MCF 10A (cell line): ENCODE measurements at regions of chr5 and their contacts with region 1.

Region 1: DNA sequence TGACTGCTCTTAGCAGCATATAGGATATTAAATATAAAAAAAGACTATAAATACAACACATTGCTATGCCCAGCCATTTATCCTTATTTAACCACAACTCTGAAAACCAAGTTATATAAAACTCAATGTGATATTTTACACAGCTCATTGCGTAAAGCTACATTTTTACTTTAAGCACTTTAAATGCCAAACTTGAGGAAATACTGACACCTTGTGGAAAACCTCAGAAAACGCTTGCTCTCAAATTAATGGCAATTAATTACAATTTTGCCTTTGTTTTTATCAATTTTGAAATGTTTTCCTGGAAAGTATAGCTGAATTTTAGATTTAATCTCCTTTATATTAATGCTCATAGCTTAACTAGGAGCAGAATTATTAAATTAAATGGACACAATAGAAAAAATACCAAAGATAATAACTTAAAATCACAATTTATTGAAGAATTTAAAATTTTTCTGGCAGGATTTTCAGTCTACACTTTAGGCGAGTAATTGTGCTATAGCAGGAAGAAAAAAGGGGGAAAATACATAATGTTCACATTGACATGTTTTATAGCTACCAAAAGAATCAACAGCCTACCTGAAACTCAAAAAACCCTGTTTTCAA is 25.2 kb upstream of the PLAC8L1 start:
- DNase-seq: peak; percentile 59
- H3K4me3 Mint-ChIP-seq: no peak overlapping the region
- H3K27ac Mint-ChIP-seq: peak overlapping the region; percentile 27
- H3K4me1 Mint-ChIP-seq: no peaks in the 10 kb centered on the region
- H3K27me3 Mint-ChIP-seq: no peaks in the 10 kb centered on the region
- CTCF ChIP-seq: peak; percentile 70

Region 2: GRCh38 chr5:144832416-144832815 is 1298.1 kb before region 1 on chr5:
- CTCF ChIA-PET with region 1: no interaction called
- POLR2A ChIA-PET with region 1: no interaction called
- intact Hi-C with region 1: no loop called
- DNase-seq: peak; percentile 26
- H3K4me3 Mint-ChIP-seq: no peak overlapping the region
- H3K27ac Mint-ChIP-seq: no peak overlapping the region
- H3K4me1 Mint-ChIP-seq: peaks cover 5% of the 10 kb centered on the region
- H3K27me3 Mint-ChIP-seq: no peaks in the 10 kb centered on the region
- CTCF ChIP-seq: no peak

Region 3: GRCh38 chr5:145887976-145888574 is 242.5 kb before region 1 on chr5:
- CTCF ChIA-PET with region 1: no interaction called
- POLR2A ChIA-PET with region 1: no interaction called
- intact Hi-C with region 1: no loop called
- DNase-seq: peak; percentile 77
- H3K4me3 Mint-ChIP-seq: no peak overlapping the region
- H3K27ac Mint-ChIP-seq: no peak overlapping the region
- H3K4me1 Mint-ChIP-seq: peaks cover 5% of the 10 kb centered on the region
- H3K27me3 Mint-ChIP-seq: no peaks in the 10 kb centered on the region
- CTCF ChIP-seq: peak; percentile 79

Region 4: GRCh38 chr5:146116361-146116760 is 14.2 kb before region 1 on chr5:
- CTCF ChIA-PET with region 1: interaction called, 42 read pairs
- POLR2A ChIA-PET with region 1: interaction called, 3 read pairs
- intact Hi-C with region 1: no loop called
- DNase-seq: no peak
- H3K4me3 Mint-ChIP-seq: no peak overlapping the region
- H3K27ac Mint-ChIP-seq: no peak overlapping the region
- H3K4me1 Mint-ChIP-seq: no peaks in the 10 kb centered on the region
- H3K27me3 Mint-ChIP-seq: no peaks in the 10 kb centered on the region
- CTCF ChIP-seq: no peak

Region 5: DNA sequence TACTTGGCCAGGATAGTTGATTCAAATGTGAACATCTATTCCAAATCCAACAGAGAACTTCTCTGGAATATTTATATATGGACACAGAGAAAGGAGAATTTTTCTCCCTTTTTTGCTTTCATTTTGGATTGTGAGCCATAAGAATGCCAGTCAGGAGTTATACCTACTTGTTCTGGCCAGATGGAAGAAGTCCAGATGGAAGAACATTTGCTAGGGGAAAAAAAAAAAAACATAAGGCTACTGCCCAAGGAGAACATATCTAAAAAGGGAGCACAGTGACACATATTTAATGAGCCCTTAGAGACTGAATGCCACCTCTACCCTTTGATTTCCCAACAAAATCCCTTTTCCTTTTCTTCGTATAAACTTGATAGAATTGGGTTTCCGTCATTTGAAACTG is 809.8 kb after region 1 on chr5:
- CTCF ChIA-PET with region 1: no interaction called
- POLR2A ChIA-PET with region 1: no interaction called
- intact Hi-C with region 1: no loop called
- DNase-seq: no peak
- H3K4me3 Mint-ChIP-seq: no peak overlapping the region
- H3K27ac Mint-ChIP-seq: no peak overlapping the region
- H3K4me1 Mint-ChIP-seq: no peaks in the 10 kb centered on the region
- H3K27me3 Mint-ChIP-seq: no peaks in the 10 kb centered on the region
- CTCF ChIP-seq: no peak